ENCODE measurements at regions of chr17 and their contacts with region 1.

Region 1: DNA sequence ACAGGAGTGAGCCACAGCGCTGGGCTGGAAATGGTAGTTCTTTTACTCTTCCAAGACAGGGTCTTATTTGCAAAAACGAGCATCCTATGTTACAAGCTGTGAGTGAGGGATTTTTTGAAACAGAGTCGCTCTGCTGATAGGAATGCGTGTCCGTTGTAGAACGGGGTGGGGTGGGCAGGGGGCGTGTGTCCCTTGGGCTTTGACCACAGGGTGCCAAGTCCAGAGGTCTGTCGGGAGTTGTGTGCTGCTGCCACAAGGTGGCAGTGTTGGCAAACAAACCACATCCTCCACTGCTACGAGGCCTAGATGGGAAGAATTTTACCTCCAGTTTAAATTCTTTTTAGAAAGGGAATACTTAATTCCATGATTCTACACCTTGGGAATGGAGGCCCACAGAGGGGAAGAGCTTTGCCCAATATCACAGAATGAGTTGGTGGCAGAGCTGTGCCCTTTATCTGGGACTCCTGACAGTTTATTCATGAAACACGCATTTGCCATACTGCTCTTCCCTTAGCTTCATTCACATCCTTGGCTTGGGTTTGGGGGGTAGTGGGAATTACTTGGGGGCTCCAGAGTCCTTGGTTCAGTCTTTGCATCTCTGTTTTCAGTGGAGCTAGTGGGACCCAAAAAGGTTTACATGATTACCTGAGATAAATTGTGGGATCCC is 30.6 kb upstream of the ETV4 start:
- DNase-seq: peak; percentile 75
- H3K4me3 Mint-ChIP-seq: no peak overlapping the region
- H3K27ac Mint-ChIP-seq: no peak overlapping the region
- H3K4me1 Mint-ChIP-seq: peaks cover 20% of the 10 kb centered on the region
- H3K27me3 Mint-ChIP-seq: peaks cover 8% of the 10 kb centered on the region

Region 2: DNA sequence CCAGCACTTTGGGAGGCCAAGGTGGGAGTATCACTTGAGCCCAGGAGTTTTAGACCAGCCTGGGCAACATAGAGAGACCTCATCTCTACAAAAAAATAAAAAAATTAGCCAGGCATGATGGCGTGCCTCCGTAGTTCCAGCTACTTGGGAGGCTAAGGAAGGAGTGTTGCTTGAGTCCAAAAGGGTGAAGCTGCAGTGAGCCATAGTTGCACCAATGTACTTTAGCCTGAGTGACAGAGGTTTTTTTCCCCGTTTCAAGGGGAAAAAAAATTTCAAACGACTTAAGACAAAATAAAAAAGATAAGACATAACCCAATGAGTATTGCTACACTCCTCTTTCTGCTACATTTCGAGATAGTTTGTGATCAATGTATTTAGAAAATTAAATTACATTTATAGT is 86.1 kb before region 1 on chr17:
- CTCF ChIA-PET with region 1: no interaction called
- DNase-seq: no peak
- H3K4me3 Mint-ChIP-seq: no peak overlapping the region
- H3K27ac Mint-ChIP-seq: no peak overlapping the region
- H3K4me1 Mint-ChIP-seq: peaks cover 15% of the 10 kb centered on the region
- H3K27me3 Mint-ChIP-seq: no peaks in the 10 kb centered on the region

Region 3: GRCh38 chr17:43562679-43563599 is 13.8 kb before region 1 on chr17:
- CTCF ChIA-PET with region 1: interaction called, 10 read pairs
- DNase-seq: no peak
- H3K4me3 Mint-ChIP-seq: no peak overlapping the region
- H3K27ac Mint-ChIP-seq: no peak overlapping the region
- H3K4me1 Mint-ChIP-seq: peaks cover 2% of the 10 kb centered on the region
- H3K27me3 Mint-ChIP-seq: peaks cover 49% of the 10 kb centered on the region

Region 4: GRCh38 chr17:43766413-43767052 is 189.8 kb after region 1 on chr17:
- CTCF ChIA-PET with region 1: interaction called, 51 read pairs
- DNase-seq: peak; percentile 65
- H3K4me3 Mint-ChIP-seq: no peak overlapping the region
- H3K27ac Mint-ChIP-seq: no peak overlapping the region
- H3K4me1 Mint-ChIP-seq: peaks cover 3% of the 10 kb centered on the region
- H3K27me3 Mint-ChIP-seq: peaks cover 5% of the 10 kb centered on the region

Measured in activated naive CD4-positive, alpha-beta T cell treated with anti-CD3 and anti-CD28 coated beads, Interleukin-2, amount 10 ng/mL, durations not matched to agents 7 days and 5 days (primary cell).